Vagina (tissue), 2 donors: ENCODE measurements at regions of chr10 and their contacts with region 1.

Region 1: DNA sequence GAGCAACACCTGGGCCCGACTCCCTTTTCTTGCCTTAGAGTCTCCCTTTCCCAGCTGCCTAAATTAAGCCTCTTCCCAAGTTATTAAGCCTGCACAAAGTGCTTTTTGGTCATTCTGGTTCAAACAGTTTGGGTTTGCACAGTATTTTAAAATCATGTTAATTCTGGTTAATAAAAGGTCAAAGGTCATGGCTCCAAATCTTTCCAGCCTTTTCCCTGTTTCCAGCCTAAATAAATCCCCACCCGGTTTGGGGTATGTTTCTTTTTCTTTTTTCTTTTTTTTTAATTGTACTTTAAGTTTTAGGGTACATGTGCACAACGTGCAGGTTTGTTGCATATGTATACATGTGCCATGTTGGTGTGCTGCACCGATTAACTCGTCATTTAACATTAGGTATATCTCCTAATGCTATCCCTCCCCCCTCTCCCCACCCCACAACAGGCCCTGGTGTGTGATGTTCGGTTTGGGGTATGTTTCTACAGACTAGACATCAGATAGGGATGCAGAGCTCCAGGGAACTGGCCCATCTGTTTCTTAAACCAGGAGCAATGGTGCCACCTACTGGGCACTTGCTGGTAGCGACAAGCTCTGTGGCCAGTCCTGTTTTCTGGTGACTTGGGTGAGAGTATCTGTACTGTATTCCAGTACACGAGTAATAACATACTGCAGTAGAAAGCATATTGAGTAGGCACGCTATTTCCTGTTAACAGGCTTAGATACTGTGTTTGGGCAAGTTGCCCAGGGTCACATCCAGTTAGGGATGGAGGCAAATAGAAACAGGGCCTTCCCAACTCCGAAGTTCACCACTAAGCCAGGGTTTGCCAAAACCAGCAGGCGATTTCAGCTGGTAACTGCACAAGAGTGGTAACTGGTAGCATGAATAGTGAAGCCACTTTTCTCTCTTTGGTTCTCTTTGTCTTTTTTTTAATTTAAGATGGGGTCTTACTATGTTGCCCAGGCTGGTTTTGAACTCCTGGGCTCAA is 60.6 kb upstream of the TRIM8 start:
- DNase-seq: no peak
- H3K4me3 ChIP-seq: no peak overlapping the region
- H3K27ac ChIP-seq: no peak overlapping the region
- H3K4me1 ChIP-seq: peaks cover 20% of the 10 kb centered on the region
- H3K27me3 ChIP-seq: no peaks in the 10 kb centered on the region
- CTCF ChIP-seq: peak; percentile 81 to 95 (median 92)
- POLR2A ChIP-seq: no peak

Region 2: GRCh38 chr10:102394079-102394800 is 189.5 kb before region 1 on chr10:
- intact Hi-C with region 1: loop called (anchors 10 kb)
- DNase-seq: peak in 1 of 2 donors; percentile 96
- H3K4me3 ChIP-seq: peak overlapping the region; percentile 67 to 90
- H3K27ac ChIP-seq: peak overlapping the region; percentile 98
- H3K4me1 ChIP-seq: peaks cover 42% of the 10 kb centered on the region
- H3K27me3 ChIP-seq: no peaks in the 10 kb centered on the region
- CTCF ChIP-seq: peak in 2 of 3 experiments; percentile 69 to 97
- POLR2A ChIP-seq: peak; percentile 41 to 81

Region 3: DNA sequence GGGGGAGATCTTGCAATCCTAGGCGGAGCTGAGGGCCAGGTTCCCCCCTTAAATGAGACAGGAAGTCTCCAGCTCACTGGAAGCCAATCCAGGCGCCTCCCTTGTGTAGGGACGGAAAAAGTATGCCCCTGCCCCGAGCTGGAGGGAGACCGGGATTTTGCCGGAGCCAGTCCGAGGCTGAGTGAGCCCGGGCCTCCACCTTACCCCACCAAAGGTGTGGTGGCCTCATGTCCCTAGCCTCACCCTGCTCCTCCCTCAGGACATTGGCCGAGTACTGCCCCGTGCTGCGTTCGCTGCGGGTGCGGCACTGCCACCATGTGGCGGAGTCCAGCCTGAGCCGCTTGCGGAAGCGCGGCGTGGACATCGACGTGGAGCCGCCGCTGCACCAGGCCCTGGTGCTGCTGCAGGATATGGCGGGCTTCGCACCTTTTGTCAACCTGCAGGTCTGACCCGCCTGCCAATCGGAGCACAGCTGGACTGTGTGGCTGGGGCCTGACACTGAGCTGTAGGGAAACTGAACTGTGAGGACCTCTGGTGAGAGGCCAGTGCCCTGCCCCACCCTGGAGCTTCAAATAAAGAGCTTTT is 161.1 kb before region 1 on chr10:
- intact Hi-C with region 1: no loop called
- DNase-seq: no peak
- H3K4me3 ChIP-seq: peak overlapping the region; percentile 59 to 93
- H3K27ac ChIP-seq: peak overlapping the region; percentile 73
- H3K4me1 ChIP-seq: peaks cover 39% of the 10 kb centered on the region
- H3K27me3 ChIP-seq: no peaks in the 10 kb centered on the region
- CTCF ChIP-seq: peak; percentile 27 to 65 (median 57)
- POLR2A ChIP-seq: no peak

Region 4: DNA sequence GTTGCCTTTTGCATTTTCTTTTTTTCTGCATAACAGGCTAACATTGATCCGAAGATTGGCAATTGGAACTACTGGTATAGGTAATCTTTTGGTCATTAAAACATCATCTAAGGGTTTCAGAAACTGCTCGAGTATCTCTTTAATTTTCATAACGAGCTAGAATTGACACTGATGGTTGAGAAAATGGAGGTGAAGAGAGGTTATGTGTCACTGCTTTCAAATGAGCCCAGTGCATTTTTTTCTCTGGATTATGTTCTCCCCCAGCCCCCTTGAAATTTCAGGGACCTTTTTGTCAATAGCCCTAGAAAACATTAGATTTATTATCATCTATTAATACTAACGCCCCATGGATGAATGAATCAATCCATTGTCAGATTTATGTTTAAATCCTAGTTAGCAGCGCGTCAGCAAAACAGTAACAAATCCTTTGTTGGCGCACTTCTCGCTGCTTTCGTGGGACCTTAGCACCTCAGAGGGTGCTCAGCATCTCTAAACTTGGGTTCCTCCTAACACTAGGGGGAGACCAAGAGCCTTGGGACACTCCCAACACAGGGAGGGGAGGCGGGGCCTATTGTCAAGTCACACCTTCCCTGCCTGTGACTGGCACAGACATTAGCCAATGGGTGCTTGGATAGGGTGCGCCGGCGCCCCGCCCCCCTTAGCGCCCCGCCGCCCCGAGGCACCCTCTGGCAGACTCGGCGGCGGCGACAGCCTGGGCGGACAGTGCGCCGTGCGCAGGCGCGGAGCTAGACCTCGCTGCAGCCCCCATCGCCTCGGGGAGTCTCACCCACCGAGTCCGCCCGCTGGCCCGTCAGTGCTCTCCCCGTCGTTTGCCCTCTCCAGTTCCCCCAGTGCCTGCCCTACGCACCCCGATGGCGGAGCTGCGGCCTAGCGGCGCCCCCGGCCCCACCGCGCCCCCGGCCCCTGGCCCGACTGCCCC is 80.2 kb before region 1 on chr10 and contains the start of gene SUFU:
- intact Hi-C with region 1: loop called (anchors 5 kb)
- DNase-seq: peak in 1 of 2 donors; percentile 99
- H3K4me3 ChIP-seq: peak within 1 kb of the TSS; percentile 88 to 100
- H3K27ac ChIP-seq: peak within 1 kb of the TSS; percentile 97
- H3K4me1 ChIP-seq: peaks cover 72% of the 10 kb centered on the region
- H3K27me3 ChIP-seq: no peaks in the 10 kb centered on the region
- CTCF ChIP-seq: peak; percentile 63 to 95 (median 87)
- POLR2A ChIP-seq: peak in 1 of 2 donors; percentile 67
- total RNA-seq, gene SUFU: 12.5 TPM